B cell (primary cell): ENCODE measurements at regions of chr3 and their contacts with region 1.

Region 1: DNA sequence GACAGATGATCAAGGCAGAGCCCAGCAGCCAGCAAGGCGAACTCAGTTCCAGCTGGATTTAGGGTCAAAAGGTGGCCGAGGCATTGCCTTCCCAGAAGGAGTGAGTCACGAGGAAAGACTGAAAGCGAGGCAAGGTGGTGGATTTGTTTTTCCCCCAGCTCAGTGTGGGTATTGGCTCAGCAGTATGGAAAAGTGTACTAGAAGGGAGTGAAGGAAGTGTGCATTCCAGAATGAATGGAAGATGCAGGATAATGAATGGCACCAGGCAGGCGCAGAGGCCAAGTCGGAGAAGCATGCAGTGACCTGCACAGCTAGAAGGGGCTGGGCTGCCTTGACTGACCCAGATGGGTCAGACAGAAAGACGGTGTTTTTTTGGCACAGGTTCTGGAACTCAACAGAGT is 46.3 kb downstream of the FOXP1 start:
- DNase-seq: no peak
- ATAC-seq: no peak
- H3K4me3 ChIP-seq: no peak overlapping the region
- H3K4me3 Mint-ChIP-seq: no peak overlapping the region
- H3K27ac ChIP-seq: no peak overlapping the region
- H3K27ac Mint-ChIP-seq: no peak overlapping the region
- H3K4me1 ChIP-seq: peaks cover 2 to 12% of the 10 kb centered on the region in 2 donors
- H3K4me1 Mint-ChIP-seq: peaks cover 20% of the 10 kb centered on the region
- H3K27me3 ChIP-seq: no peaks in the 10 kb centered on the region
- H3K27me3 Mint-ChIP-seq: peaks cover 6% of the 10 kb centered on the region
- CTCF ChIP-seq: no peak

Region 2: GRCh38 chr3:71285086-71285485 is 252.1 kb before region 1 on chr3:
- CTCF ChIA-PET with region 1: no interaction called
- POLR2A ChIA-PET with region 1: interaction called, 10 read pairs
- intact Hi-C with region 1: no loop called
- DNase-seq: no peak
- ATAC-seq: no peak
- H3K4me3 ChIP-seq: no peak overlapping the region
- H3K4me3 Mint-ChIP-seq: no peak overlapping the region
- H3K27ac ChIP-seq: no peak overlapping the region
- H3K27ac Mint-ChIP-seq: no peak overlapping the region
- H3K4me1 ChIP-seq: peaks cover 3 to 4% of the 10 kb centered on the region in 2 donors
- H3K4me1 Mint-ChIP-seq: peaks cover 41% of the 10 kb centered on the region
- H3K27me3 ChIP-seq: no peaks in the 10 kb centered on the region
- H3K27me3 Mint-ChIP-seq: no peaks in the 10 kb centered on the region
- CTCF ChIP-seq: no peak